Right ventricle myocardium superior (tissue), 1 donor: ENCODE measurements at regions of chr2 and their contacts with region 1.

Region 1: GRCh38 chr2:42859006-42859552 is 66.7 kb upstream of the HAAO start:
- DNase-seq: no peak
- ATAC-seq: no peak

Region 2: DNA sequence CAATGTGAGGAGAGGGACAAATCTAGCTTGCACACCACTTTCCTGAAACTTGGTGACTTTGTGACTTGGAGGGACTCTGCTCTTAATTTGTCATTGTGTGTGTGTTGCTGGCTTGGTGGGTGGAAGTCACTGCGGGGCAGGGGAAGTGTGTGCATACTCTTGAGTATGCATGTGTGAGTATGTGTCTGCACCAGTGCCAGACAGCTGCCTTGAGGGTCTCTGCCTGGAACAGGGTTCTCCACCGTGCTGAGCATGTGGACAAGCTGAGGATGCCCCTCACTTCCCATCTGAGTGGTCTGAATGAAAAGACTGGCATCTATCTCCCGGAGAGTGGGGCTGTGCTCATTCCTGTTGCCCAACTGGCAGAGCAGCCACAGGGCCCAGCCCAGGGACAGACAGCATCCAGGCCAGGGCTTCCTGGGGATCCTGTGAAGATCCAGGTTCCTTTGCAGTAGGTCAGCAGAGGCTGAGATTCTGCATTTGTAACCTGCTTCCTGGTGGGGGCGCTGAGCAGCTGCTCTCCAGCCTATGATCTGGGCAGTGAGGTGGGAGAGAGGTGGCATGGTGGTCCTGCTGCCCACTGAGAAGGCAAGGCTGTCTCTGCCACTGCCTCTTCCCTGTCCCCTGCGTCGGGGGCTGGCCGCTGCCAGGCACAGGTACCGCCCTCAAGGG is 72.2 kb after region 1 on chr2:
- intact Hi-C with region 1: loop called (anchors 5 kb)
- DNase-seq: no peak
- ATAC-seq: no peak

Region 3: DNA sequence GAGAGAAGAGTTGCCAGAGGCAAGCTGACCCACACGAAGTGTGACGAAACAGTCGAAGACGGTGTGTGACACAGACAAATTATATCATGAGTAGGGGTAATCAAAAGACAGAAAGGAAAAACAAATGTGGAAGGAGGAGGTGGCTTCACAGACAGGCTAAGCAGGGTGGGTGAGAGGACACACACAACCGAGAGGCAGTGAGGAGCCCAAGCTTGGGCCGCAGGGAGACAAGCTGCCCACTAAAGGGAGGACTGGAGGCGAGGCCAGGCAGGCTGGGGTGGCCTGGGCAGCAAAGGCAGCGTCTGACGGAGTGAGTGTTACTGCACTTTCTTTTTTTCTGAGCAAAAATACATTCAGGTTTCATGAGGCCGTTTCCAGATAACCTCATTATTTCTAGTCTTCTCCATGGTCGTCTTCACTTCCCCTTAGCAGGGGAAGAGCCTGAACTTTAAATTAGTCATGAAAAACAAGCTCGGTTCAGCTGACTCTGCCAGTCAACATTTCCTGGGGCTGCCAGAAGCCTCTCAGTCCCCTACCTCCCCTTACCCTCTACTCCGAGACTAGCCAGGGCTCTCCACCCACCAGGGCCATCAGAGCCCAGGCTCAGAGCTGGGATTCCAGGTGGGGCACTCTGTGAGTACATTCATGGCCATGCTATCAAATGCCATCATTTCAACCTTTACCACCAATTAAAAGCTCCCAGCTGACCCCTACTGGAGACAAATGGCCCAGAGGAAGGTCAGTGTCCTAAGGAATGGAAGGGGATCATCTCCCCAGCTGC is 381.1 kb after region 1 on chr2:
- intact Hi-C with region 1: loop called (anchors 10 kb)
- DNase-seq: no peak
- ATAC-seq: no peak

Region 4: GRCh38 chr2:43331422-43331821 is 472.3 kb after region 1 on chr2:
- intact Hi-C with region 1: no loop called
- DNase-seq: no peak
- ATAC-seq: peak; percentile 64